Common myeloid progenitor, CD34-positive (primary cell): ENCODE measurements at regions of chr2 and their contacts with region 1.

Region 1: DNA sequence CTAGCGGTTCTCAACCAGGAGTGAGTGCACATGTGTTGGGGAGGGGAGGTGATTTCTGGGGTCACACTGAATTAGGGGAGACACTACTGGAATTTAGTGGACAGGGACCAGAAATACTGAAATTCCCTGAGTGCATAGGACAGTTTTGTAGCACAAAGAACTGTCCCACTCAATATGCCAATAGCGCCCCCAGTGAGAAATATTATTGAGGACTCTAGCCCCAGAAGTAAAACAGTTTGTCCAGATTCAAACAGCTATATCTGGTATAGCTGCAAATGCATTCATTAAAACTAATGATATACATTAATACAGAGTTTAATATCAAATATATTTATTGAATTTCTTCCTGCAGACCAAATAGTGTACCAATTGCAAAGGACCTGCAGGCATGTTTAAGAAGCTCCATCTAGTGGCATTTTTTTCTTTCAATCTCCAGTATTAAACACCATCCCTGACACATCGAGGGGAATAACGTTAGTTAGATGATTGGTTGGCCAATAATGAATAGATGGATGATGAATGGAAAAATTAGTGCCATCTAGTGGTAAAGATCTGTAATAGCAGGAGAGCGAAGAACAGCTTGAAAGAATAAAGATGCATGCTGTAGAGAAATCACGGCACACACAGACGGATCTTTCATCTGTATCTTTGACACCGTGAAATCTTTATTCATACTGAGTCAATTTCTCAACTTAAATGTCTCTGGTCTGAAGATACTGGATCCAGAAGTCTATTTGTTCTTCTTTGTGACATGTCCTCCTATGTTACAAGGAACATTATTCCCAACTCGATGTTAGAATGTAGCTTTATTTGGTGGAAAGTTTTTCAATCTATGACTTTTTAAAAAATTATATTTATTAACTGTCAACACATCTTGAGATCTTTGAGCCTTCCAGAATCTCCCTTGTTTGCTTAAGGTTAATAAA is 62.5 kb downstream of the DHRS9 start:
- DNase-seq: peak; percentile 42 to 74 (median 67)
- H3K4me3 ChIP-seq: no peak overlapping the region
- H3K27ac ChIP-seq: no peak overlapping the region
- H3K4me1 ChIP-seq: peaks cover 0 to 1% (median 0%) of the 10 kb centered on the region in 4 experiments
- H3K27me3 ChIP-seq: no peaks in the 10 kb centered on the region

Region 2: GRCh38 chr2:168956392-168956791 is 175.5 kb before region 1 on chr2:
- CTCF ChIA-PET with region 1: interaction called, 26 read pairs
- POLR2A ChIA-PET with region 1: no interaction called
- DNase-seq: no peak
- H3K4me3 ChIP-seq: no peak overlapping the region
- H3K27ac ChIP-seq: no peak overlapping the region
- H3K4me1 ChIP-seq: no peaks in the 10 kb centered on the region
- H3K27me3 ChIP-seq: no peaks in the 10 kb centered on the region